ENCODE measurements at regions of chr5 and their contacts with region 1.

Region 1: DNA sequence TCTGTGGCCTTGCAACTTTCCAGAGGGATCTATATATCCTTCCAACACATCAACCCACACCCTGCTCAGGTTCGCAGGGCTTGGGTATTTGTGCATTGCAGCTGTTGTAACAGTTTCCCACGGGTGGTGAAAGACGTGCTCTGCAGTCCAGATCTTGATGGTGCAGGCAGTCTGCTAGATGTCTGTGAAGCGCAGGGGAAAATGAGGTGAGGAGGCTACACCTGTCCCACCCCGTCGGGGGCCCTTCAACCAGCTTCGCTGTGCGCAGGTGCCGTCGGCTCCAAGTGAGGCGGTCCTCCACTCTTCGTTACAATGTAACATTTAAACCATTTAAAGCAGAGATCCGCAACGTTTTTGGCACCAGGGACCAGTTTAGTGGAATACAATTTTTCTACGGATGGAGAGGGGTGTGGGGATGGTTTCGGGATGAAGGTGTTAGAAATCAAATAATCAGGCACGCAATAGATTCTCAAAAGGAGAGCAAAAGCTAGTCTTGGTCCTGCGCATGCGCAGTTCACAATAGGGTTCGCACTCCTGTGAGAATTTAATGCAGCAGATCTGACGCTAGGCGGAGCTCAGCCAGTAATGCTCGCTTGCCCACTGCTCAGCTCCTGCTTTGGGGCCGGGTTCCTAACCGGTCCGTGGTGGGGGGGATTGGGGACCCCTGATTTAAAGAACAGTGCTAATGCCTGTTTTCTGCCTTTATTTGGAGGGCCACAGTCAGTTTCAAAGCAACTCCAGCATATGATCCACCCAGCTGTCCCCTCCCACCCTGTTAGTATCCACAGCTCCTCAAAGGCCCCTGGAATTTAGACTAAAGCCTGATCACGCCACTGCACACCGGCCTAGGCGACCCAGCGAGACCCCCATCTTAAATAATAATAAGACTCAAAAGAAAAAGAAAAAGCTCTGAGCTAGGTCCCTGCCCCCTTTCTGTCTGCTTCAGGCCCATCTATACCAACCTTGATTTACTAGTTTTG is 97.1 kb upstream of the SELENOP start:
- DNase-seq: peak; percentile 87 to 91 (median 90)
- H3K4me3 ChIP-seq: peak overlapping the region; percentile 1 to 88 (median 72)
- H3K27ac ChIP-seq: no peak overlapping the region
- H3K4me1 ChIP-seq: peaks cover 0 to 7% (median 6%) of the 10 kb centered on the region in 4 experiments
- H3K27me3 ChIP-seq: peaks cover 0 to 12% (median 5%) of the 10 kb centered on the region in 5 experiments

Region 2: DNA sequence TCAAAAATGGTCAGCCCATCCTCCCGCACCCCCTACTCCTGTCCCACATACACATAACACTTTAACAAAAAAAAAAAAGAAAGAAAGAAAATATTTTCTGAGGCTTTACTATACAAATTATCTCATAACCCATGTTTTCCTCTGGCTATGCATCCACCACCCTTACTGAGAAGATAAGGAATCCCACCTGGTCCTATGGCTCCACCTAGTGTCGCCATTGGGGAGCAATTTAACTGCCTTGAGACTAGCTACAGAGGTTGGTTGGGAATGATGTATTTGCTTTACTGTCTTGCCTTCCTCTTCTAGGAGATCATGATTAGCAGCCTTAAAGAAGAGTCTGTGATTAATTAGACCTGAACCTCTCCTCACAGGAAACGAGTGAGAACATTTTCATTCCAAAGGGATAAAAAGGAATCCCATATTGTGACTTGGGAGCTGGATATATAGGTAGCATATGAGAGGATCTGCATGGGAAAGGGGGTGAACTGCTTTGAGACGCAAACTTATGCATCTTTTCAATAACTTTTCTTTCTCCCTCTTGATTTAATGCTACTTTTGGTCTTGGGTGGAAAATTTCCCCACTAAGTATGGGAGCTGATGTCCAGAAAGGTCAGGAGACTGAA is 19.4 kb before region 1 on chr5:
- CTCF ChIA-PET with region 1: interaction called, 11 read pairs
- POLR2A ChIA-PET with region 1: no interaction called
- DNase-seq: peak; percentile 82 to 92 (median 89)
- H3K4me3 ChIP-seq: no peak overlapping the region
- H3K27ac ChIP-seq: no peak overlapping the region
- H3K4me1 ChIP-seq: peaks cover 0 to 2% (median 0%) of the 10 kb centered on the region in 4 experiments
- H3K27me3 ChIP-seq: no peaks in the 10 kb centered on the region

Region 3: GRCh38 chr5:42950440-42951292 is 41.9 kb after region 1 on chr5:
- CTCF ChIA-PET with region 1: interaction called, 15 read pairs
- POLR2A ChIA-PET with region 1: interaction called, 5 read pairs
- DNase-seq: peak; percentile 97 to 98 (median 98)
- H3K4me3 ChIP-seq: peak overlapping the region; percentile 56 to 84 (median 74)
- H3K27ac ChIP-seq: peak overlapping the region; percentile 89 to 97
- H3K4me1 ChIP-seq: peaks cover 8 to 42% (median 36%) of the 10 kb centered on the region in 4 experiments
- H3K27me3 ChIP-seq: peaks cover 0 to 5% (median 0%) of the 10 kb centered on the region in 5 experiments

Region 4: DNA sequence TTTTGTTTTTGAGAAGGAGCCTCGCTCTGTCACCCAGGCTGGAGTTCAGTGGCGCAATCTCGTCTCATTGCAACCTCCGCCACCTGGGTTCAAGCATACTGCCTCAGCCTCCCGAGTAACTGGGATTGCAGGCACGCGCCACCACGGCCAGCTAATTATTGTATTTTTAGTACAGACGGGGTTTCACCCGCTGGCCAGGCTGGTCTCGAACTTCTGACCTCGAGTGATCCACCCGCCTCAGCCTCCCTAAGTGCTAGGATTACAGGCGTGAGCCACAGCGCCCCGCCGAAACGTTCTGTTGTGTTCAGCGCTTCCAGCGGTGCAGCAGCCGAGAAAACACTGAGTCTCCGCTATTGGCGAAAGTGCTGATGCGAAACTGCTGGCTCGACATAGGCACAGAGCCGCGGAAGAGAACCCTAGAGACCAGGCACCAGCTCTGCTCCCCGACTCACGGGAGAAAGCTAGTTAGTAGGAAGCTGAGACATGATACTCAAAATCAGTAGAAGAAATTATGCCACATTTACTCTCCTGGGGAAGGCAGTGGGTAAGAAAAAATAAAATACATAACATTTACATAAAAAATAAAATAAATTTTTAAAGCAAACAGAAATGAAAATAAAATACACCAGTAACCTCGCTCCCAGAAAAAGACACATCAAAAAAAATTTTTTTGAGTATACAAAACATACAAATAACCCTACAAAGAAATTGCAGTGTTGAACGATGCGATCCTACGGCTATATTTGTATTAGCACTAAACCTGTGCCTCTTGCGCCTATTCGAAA is 99.8 kb after region 1 on chr5:
- CTCF ChIA-PET with region 1: interaction called, 35 read pairs
- POLR2A ChIA-PET with region 1: interaction called, 3 read pairs
- DNase-seq: peak; percentile 98 to 99 (median 99)
- H3K4me3 ChIP-seq: peak overlapping the region; percentile 32 to 95 (median 82)
- H3K27ac ChIP-seq: peak overlapping the region; percentile 89 to 91
- H3K4me1 ChIP-seq: peaks cover 12 to 44% (median 31%) of the 10 kb centered on the region in 4 experiments
- H3K27me3 ChIP-seq: no peaks in the 10 kb centered on the region

Region 5: GRCh38 chr5:43105369-43106289 is 196.8 kb after region 1 on chr5:
- CTCF ChIA-PET with region 1: interaction called, 11 read pairs
- POLR2A ChIA-PET with region 1: no interaction called
- DNase-seq: peak; percentile 98 to 99 (median 99)
- H3K4me3 ChIP-seq: peak overlapping the region; percentile 35 to 85 (median 66)
- H3K27ac ChIP-seq: peak overlapping the region in 1 of 2 experiments; percentile 55
- H3K4me1 ChIP-seq: peaks cover 0 to 10% (median 5%) of the 10 kb centered on the region in 4 experiments
- H3K27me3 ChIP-seq: no peaks in the 10 kb centered on the region